ENCODE measurements at regions of chr6 and their contacts with region 1.

Region 1: DNA sequence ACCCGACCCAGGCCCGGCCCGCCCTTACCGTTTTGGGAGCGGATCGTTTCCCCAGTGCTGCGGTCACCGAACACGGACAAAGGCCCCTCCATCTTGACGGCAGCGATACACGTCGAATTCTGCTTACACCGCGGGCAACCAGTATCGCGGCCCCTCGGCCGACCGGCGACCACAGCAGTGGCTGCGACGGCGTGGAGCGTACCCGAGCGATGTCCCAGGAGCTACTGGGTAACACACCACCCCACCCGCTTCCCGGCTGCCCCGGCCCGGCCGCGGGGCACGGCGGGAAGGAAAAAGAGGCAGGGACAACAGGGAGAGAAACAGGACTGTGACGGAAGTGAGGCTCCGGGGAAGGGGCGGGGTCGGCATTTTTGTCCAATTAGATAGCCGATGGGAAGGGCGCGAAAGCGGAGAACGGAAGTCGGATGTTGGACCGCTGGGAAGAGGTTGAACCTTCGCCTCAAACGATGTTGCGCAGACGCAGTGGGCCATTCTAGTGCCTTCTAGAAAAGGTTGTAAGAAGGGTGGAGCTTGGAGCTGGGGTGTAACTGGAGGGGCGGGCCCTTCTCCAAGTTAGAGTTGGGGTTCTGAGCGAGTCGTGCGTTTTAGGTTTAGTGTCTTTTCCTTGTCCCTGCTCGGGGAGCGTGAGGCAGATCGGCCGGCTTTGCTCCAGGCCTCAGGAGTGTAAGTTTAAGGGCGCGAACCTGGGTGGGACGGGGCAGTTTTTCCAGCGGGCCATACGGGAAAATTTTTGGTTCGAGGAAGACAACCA is at the start of gene TCP1:
- DNase-seq: peak; percentile 99 to 100 (median 99)
- ATAC-seq: peak; percentile 88
- H3K4me3 ChIP-seq: peak within 1 kb of the TSS; percentile 99
- H3K4me1 ChIP-seq: peaks cover 33% of the 10 kb centered on the region
- CTCF ChIP-seq: no peak
- total RNA-seq, gene TCP1: 139 to 205 (median 170) TPM

Region 2: GRCh38 chr6:159693128-159693893 is 96.3 kb before region 1 on chr6 and contains the start of gene SOD2:
- intact Hi-C with region 1: loop called in 1 of 2 experiments (anchors 5 kb)
- DNase-seq: peak; percentile 86 to 94 (median 93)
- ATAC-seq: peak; percentile 87
- H3K4me3 ChIP-seq: peak within 1 kb of the TSS; percentile 73
- H3K4me1 ChIP-seq: peaks cover 20% of the 10 kb centered on the region
- CTCF ChIP-seq: no peak
- total RNA-seq, gene SOD2: 286 to 462 (median 400) TPM

Region 3: GRCh38 chr6:159726918-159727716 is 62.4 kb before region 1 on chr6 and contains the start of gene WTAP:
- intact Hi-C with region 1: loop called in 1 of 2 experiments (anchors 10 kb)
- DNase-seq: peak; percentile 97 to 99 (median 98)
- ATAC-seq: peak; percentile 95
- H3K4me3 ChIP-seq: peak within 1 kb of the TSS; percentile 97
- H3K4me1 ChIP-seq: peaks cover 13% of the 10 kb centered on the region
- CTCF ChIP-seq: no peak
- total RNA-seq, gene WTAP: 81.1 to 85.8 (median 84.4) TPM

Measured in mucosa of descending colon (tissue), 3 donors.